GM12878 (cell line): ENCODE measurements at regions of chr5 and their contacts with region 1.

Region 1: DNA sequence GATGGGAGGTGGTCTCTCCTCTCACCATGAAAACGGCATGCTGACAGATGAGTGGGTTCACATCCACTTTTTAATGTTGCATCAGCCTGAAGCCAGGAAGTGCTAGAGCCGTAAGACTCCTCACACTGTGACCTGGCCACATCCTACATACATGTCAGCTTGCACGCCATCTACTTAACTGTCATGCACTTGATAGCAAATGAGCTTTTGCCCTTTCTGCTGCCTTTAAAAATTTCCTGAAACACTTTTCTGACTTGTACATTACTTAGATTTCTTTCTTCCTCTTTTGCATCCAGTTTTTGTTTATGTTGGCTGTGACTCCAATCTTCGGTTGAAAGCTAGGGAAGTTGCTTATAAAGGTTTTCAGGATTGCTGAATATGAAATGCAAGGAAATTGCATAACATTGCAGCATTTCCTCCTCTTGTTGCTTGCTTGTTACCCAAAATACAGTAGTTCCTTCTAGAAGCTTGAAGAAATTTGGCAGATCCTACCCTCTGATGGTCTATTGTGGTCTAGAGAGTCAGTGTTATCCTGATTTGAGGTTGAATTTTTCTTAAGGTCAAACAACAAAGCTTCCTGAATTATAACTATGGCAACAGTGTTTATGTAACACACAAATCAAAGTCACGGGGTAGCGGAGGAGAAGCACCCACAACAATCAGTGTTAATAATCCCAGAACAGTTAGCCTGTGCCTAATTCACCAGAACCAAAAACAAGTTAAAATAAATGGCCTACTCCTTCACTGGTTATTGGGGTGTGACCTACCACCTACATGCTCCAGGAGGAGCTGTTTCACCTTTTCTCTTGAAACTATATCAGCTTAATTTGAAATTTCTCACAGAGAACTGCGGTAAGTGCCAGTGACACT is 232.5 kb downstream of the ARHGAP26 start:
- DNase-seq: peak; percentile 82
- ATAC-seq: peak; percentile 78
- H3K4me3 ChIP-seq: no peak overlapping the region
- H3K27ac ChIP-seq: peak overlapping the region; percentile 89
- H3K4me1 ChIP-seq: peaks cover 49% of the 10 kb centered on the region
- H3K27me3 ChIP-seq: no peaks in the 10 kb centered on the region
- CTCF ChIP-seq: peak; percentile 71 to 79 (median 75)
- EP300 ChIP-seq: peak; percentile 95 to 97
- POLR2A ChIP-seq: peak; percentile 47; the same call in 1 of the 2 replicates
- RAD21 ChIP-seq: peak; percentile 86

Region 2: GRCh38 chr5:142938266-142938880 is 64.3 kb before region 1 on chr5:
- CTCF ChIA-PET with region 1: interaction called, 3 read pairs
- POLR2A ChIA-PET with region 1: interaction called, 4 read pairs
- RAD21 ChIA-PET with region 1: interaction called, 5 read pairs
- SMC1A ChIA-PET with region 1: interaction called, 18 read pairs
- in situ Hi-C with region 1: no loop called
- intact Hi-C with region 1: loop called (anchors 5 kb)
- DNase-seq: no peak
- ATAC-seq: no peak
- H3K4me3 ChIP-seq: no peak overlapping the region
- H3K27ac ChIP-seq: no peak overlapping the region
- H3K4me1 ChIP-seq: peaks cover 4% of the 10 kb centered on the region; the same call in 1 of the 2 replicates
- H3K27me3 ChIP-seq: no peaks in the 10 kb centered on the region
- CTCF ChIP-seq: no peak
- EP300 ChIP-seq: no peak
- POLR2A ChIP-seq: no peak
- RAD21 ChIP-seq: no peak

Region 3: GRCh38 chr5:143051244-143052058 is 48.8 kb after region 1 on chr5:
- CTCF ChIA-PET with region 1: interaction called, 4 read pairs
- POLR2A ChIA-PET with region 1: no interaction called
- RAD21 ChIA-PET with region 1: interaction called, 12 read pairs
- SMC1A ChIA-PET with region 1: interaction called, 19 read pairs
- in situ Hi-C with region 1: no loop called
- intact Hi-C with region 1: loop called (anchors 10 kb)
- DNase-seq: no peak
- ATAC-seq: peak; percentile 10
- H3K4me3 ChIP-seq: no peak overlapping the region
- H3K27ac ChIP-seq: no peak overlapping the region; the same call in 1 of the 2 replicates
- H3K4me1 ChIP-seq: peaks cover 38% of the 10 kb centered on the region
- H3K27me3 ChIP-seq: no peaks in the 10 kb centered on the region
- CTCF ChIP-seq: no peak
- EP300 ChIP-seq: no peak
- POLR2A ChIP-seq: no peak
- RAD21 ChIP-seq: no peak

Region 4: GRCh38 chr5:143200781-143201398 is 198.2 kb after region 1 on chr5:
- CTCF ChIA-PET with region 1: interaction called, 21 read pairs
- POLR2A ChIA-PET with region 1: interaction called, 7 read pairs
- RAD21 ChIA-PET with region 1: interaction called, 52 read pairs
- SMC1A ChIA-PET with region 1: interaction called, 53 read pairs
- in situ Hi-C with region 1: no loop called
- intact Hi-C with region 1: loop called (anchors 1 kb)
- DNase-seq: no peak
- ATAC-seq: peak; percentile 69
- H3K4me3 ChIP-seq: no peak overlapping the region
- H3K27ac ChIP-seq: peak overlapping the region; percentile 14; the same call in 1 of the 2 replicates
- H3K4me1 ChIP-seq: peaks cover 17% of the 10 kb centered on the region
- H3K27me3 ChIP-seq: no peaks in the 10 kb centered on the region
- CTCF ChIP-seq: no peak
- EP300 ChIP-seq: no peak
- POLR2A ChIP-seq: no peak
- RAD21 ChIP-seq: no peak

Region 5: DNA sequence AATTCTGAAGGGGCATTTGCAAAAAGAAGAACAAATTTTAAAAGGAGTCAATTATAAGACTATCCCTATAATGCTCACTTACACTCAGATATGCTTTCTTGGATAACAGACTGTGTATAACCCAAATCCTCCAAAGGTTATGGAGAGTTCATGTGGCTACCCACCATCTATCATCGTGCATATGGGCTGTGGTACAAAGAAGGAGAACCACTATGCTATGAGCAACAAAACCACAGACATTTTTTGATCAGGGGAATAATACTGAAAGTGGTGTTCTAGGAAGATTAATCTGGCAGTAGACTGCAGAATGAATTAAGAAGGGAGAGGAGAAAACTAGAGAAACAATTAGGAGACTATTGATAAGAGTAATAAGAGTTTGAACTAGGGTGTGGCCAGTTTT is 384.0 kb after region 1 on chr5:
- CTCF ChIA-PET with region 1: interaction called, 3 read pairs
- POLR2A ChIA-PET with region 1: no interaction called
- RAD21 ChIA-PET with region 1: interaction called, 13 read pairs
- SMC1A ChIA-PET with region 1: interaction called, 5 read pairs
- in situ Hi-C with region 1: no loop called
- intact Hi-C with region 1: no loop called
- DNase-seq: no peak
- ATAC-seq: no peak
- H3K4me3 ChIP-seq: no peak overlapping the region
- H3K27ac ChIP-seq: no peak overlapping the region
- H3K4me1 ChIP-seq: no peaks in the 10 kb centered on the region
- H3K27me3 ChIP-seq: no peaks in the 10 kb centered on the region
- CTCF ChIP-seq: no peak
- EP300 ChIP-seq: no peak
- POLR2A ChIP-seq: no peak
- RAD21 ChIP-seq: no peak

Region 6: GRCh38 chr5:143824851-143825720 is 822.4 kb after region 1 on chr5:
- CTCF ChIA-PET with region 1: interaction called, 24 read pairs
- POLR2A ChIA-PET with region 1: interaction called, 3 read pairs
- RAD21 ChIA-PET with region 1: interaction called, 37 read pairs
- SMC1A ChIA-PET with region 1: interaction called, 21 read pairs
- in situ Hi-C with region 1: loop called (anchors 5 kb)
- intact Hi-C with region 1: loop called (anchors 2 kb)
- DNase-seq: peak; percentile 81
- ATAC-seq: peak; percentile 87
- H3K4me3 ChIP-seq: no peak overlapping the region
- H3K27ac ChIP-seq: no peak overlapping the region
- H3K4me1 ChIP-seq: peaks cover 26% of the 10 kb centered on the region
- H3K27me3 ChIP-seq: no peaks in the 10 kb centered on the region
- CTCF ChIP-seq: peak; percentile 91 to 93 (median 93); a peak in 5 of 6 replicates
- EP300 ChIP-seq: no peak
- POLR2A ChIP-seq: no peak
- RAD21 ChIP-seq: peak; percentile 100